Heart left ventricle (tissue), 16 donors: ENCODE measurements at regions of chr13 and their contacts with region 1.

Region 1: DNA sequence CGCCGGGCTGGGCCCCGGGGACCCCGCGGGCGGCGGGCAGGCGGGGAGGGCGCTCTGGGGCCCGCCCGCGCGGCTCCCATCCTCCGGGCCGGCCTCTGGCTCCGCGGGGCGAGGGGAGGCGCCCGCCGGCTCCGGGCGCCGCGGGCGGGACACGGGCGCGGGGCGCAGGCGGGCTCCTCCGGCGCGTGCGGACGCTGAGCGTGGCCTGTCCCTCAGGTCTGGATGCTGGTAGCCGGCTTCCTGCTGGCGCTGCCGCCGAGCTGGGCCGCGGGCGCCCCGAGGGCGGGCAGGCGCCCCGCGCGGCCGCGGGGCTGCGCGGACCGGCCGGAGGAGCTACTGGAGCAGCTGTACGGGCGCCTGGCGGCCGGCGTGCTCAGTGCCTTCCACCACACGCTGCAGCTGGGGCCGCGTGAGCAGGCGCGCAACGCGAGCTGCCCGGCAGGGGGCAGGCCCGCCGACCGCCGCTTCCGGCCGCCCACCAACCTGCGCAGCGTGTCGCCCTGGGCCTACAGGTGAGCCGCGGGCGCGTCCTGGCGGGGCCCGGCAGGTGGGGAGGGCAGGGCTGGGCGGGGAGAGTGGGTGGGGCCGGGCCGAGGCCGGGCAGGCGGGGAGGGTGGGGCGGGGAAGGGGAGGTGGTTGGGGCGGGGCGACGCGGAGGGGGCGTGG is 414 bp downstream of the IL17D start:
- DNase-seq: peak; percentile 67 to 87 (median 79)
- ATAC-seq: peak; percentile 71 to 91 (median 85)
- H3K4me3 ChIP-seq: peak overlapping the region in 11 of 12 donors; percentile 16 to 74 (median 58)
- H3K27ac ChIP-seq: peak overlapping the region in 2 of 12 donors; percentile 34 to 63
- H3K4me1 ChIP-seq: peaks cover 0 to 17% (median 5%) of the 10 kb centered on the region in 12 donors
- H3K27me3 ChIP-seq: peaks cover 0 to 25% (median 0%) of the 10 kb centered on the region in 9 donors
- CTCF ChIP-seq: peak; percentile 7 to 66 (median 42)
- POLR2A ChIP-seq: no peak

Region 2: DNA sequence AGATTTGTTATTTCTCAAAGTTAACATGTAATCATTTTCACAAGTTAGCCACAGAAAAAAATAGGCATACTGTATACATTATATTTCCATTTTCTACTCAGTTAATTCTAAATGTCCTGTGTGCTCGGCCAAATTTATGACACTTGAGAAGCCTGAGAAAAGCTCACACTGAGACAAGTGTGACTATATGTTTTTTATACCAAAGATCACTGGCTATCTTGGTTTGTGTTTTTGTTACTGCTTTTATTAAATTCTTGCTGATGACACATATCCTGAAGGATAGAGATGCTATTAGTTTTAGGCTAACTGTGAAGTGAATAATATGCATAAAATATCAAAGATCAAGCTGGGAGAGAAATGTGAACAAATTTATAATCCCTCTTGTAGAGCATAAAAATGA is 49.8 kb before region 1 on chr13:
- intact Hi-C with region 1: no loop called
- DNase-seq: no peak
- ATAC-seq: no peak
- H3K4me3 ChIP-seq: no peak overlapping the region
- H3K27ac ChIP-seq: no peak overlapping the region
- H3K4me1 ChIP-seq: no peaks in the 10 kb centered on the region
- H3K27me3 ChIP-seq: no peaks in the 10 kb centered on the region
- CTCF ChIP-seq: no peak
- POLR2A ChIP-seq: no peak

Region 3: DNA sequence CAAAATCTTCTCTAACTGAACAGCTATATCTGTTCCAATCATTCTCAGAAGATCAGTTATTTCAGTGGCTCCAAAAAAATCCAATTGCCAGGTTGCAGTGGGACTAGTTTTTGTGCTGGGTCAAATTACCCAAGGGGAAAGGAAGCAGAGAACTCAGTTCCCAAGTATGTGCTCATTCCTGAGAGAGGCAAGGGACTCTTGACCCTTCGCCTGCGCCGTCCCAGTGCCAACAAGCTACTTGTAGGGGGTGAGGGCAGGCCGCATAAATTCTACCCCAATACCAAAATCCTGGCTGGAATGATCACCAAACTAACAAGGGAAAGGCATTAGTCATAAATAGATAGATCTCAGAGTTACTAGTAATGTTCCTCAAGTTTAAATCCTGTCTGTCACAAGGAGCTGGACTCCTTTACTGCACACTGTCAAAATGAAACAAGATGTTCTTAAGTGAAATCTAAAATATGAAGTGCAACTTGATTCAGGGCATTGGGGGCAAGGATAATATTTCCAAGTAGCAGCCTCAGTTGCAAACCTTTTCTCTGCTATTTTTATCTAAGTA is 148.0 kb after region 1 on chr13:
- intact Hi-C with region 1: loop called in 1 of 10 experiments (anchors 10 kb)
- DNase-seq: no peak
- ATAC-seq: no peak
- H3K4me3 ChIP-seq: no peak overlapping the region
- H3K27ac ChIP-seq: no peak overlapping the region
- H3K4me1 ChIP-seq: peaks cover 0 to 27% (median 9%) of the 10 kb centered on the region in 12 donors
- H3K27me3 ChIP-seq: no peaks in the 10 kb centered on the region
- CTCF ChIP-seq: no peak
- POLR2A ChIP-seq: no peak

Region 4: DNA sequence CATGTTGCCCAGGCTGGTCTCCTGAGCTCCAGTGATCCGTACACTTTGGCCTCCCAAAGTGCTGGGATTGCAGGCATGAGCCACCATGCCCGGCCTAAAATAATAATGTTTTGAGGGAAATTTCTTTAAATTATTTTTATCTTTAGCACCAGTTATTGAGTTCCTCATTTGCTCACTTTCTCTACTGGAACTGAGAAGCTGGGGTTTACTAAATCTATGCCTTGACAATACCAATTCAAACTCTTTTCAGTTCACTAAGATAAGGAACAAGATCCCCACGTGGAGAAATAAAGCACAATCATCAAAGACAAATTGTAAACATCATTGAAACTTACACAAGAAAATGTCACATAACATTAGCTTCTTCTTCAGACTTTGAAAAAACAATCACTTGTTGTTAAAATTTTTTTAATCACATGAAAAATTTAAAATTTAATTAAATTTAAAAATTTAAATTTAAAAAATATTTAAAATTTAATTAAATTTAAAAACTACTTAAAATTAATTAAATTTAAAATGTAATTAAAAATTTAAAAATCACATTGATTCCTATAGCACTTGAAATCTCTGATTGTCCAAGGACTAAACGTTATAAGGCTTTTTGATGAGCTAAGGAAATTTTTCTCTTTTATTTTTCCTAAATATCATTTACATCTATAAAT is 223.8 kb after region 1 on chr13:
- intact Hi-C with region 1: no loop called
- DNase-seq: no peak
- ATAC-seq: no peak
- H3K4me3 ChIP-seq: no peak overlapping the region
- H3K27ac ChIP-seq: no peak overlapping the region
- H3K4me1 ChIP-seq: no peaks in the 10 kb centered on the region
- H3K27me3 ChIP-seq: no peaks in the 10 kb centered on the region
- CTCF ChIP-seq: no peak
- POLR2A ChIP-seq: no peak